Common myeloid progenitor, CD34-positive (primary cell): ENCODE measurements at regions of chr1 and their contacts with region 1.

Region 1: DNA sequence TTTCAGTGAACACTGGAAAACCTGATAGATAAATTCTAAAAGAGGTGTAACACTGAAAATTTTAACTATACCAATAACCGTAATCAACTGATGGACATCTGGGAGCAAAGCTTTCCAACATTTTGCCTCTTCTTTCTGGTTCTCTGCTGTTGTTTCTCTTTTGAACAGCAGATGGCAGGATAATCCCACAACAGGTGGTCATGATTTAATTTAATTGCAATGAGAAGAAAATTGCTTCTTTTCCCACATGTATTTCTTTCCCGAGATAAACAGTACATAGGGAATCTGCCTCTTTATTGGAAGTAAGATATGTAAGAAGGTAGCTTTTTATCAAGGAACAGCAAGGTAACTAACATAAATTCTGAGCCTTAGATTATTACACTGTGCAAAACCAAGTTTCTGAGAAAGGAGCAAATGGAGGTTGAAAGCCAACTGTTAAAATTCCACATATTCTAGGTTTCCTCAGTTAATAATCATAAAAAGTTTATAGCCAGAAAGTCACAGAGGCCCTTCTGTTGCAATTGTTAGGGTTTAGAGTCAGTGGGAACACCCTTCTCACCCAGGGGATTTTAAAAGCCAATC is 72.9 kb downstream of the RPS6KA1 start:
- DNase-seq: peak; percentile 67 to 80 (median 70)
- H3K4me3 ChIP-seq: no peak overlapping the region
- H3K27ac ChIP-seq: no peak overlapping the region
- H3K4me1 ChIP-seq: peaks cover 0 to 23% (median 12%) of the 10 kb centered on the region in 4 experiments
- H3K27me3 ChIP-seq: no peaks in the 10 kb centered on the region

Region 2: GRCh38 chr1:26541816-26542711 is 60.4 kb before region 1 on chr1:
- CTCF ChIA-PET with region 1: interaction called, 11 read pairs
- POLR2A ChIA-PET with region 1: no interaction called
- DNase-seq: peak; percentile 95 to 98 (median 98)
- H3K4me3 ChIP-seq: peak overlapping the region in 6 of 7 experiments; percentile 30 to 65 (median 39)
- H3K27ac ChIP-seq: peak overlapping the region; percentile 59 to 81
- H3K4me1 ChIP-seq: peaks cover 21 to 99% (median 93%) of the 10 kb centered on the region in 4 experiments
- H3K27me3 ChIP-seq: no peaks in the 10 kb centered on the region

Region 3: DNA sequence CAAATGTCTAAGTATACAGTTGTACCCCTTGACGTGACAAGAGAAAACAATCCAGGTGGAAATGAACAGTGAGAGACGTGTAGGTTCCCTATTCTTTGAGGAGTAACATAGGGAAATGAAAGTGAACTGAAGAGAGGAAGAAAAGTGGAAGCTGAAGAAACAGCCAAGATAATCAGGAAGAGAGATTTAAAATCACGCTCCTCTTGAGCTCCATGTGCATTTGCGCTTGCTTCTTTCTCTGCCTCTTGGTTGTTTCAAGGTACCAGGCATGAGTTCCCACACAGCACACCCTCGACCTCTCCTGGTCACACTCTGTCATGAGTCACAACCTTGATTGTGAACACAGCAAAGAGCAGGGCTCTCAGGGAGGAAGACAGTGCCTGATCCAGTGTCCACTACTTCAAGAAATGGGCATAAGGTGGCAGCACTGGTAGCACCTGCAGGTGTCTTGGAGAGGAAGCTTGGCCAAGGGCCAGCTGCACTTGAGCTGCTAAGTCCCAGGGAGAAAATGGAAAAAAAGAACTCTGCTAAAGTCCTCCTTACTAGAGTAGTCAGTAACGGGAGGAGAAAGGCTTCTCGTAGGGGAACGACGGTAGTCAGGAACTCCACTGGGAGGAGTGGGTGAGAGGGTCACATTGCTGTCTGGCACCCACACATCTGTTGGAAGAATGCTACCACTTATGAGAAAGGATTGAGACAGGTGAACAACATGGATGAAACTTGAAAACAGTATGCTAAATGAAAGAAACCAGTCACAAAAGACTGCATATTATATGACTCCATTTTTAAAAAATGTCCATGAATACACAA is 75.0 kb after region 1 on chr1:
- CTCF ChIA-PET with region 1: interaction called, 24 read pairs
- POLR2A ChIA-PET with region 1: no interaction called
- DNase-seq: peak; percentile 84 to 89 (median 89)
- H3K4me3 ChIP-seq: peak overlapping the region in 6 of 7 experiments; percentile 2 to 74 (median 42)
- H3K27ac ChIP-seq: no peak overlapping the region
- H3K4me1 ChIP-seq: peaks cover 7 to 19% (median 14%) of the 10 kb centered on the region in 4 experiments
- H3K27me3 ChIP-seq: no peaks in the 10 kb centered on the region

Region 4: DNA sequence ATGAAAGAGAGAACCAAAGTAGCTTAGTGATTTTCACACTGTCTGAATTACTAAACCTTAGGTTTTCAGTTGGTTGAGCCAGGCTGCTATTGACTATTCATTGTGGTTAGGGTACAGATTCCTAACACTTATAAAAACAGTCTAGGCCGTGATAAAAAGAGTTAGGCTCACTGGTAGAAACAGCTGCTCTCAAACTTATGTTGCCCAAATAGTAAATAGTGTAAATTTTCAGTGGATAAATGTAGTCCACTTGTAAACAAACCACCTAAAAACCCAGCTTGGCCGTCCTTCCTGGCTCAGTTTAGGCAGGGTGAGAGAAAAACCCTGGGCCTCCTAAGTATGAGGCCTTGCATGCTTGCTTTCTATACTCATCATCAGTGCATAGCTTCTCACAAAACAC is 128.2 kb after region 1 on chr1:
- CTCF ChIA-PET with region 1: interaction called, 10 read pairs
- POLR2A ChIA-PET with region 1: no interaction called
- DNase-seq: no peak
- H3K4me3 ChIP-seq: no peak overlapping the region
- H3K27ac ChIP-seq: peak overlapping the region in 1 of 2 experiments; percentile 6
- H3K4me1 ChIP-seq: peaks cover 0 to 17% (median 7%) of the 10 kb centered on the region in 4 experiments
- H3K27me3 ChIP-seq: no peaks in the 10 kb centered on the region

Region 5: DNA sequence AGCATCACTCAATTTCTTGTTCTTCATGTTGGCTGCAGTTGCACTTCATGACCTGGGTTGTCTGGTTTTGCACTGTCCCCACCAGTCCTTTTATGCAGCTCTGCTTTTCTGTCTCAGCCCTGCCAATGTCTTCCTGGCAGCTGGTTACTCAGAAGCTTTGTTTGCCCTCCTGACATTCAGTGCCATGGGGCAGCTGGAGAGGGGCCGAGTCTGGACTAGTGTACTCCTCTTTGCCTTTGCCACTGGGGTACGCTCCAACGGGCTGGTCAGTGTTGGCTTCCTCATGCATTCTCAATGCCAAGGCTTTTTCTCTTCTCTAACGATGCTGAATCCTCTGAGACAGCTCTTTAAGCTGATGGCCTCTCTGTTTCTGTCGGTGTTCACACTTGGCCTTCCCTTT is 191.9 kb after region 1 on chr1:
- CTCF ChIA-PET with region 1: interaction called, 186 read pairs
- POLR2A ChIA-PET with region 1: no interaction called
- DNase-seq: no peak
- H3K4me3 ChIP-seq: no peak overlapping the region
- H3K27ac ChIP-seq: no peak overlapping the region
- H3K4me1 ChIP-seq: peaks cover 18 to 25% (median 21%) of the 10 kb centered on the region in 4 experiments
- H3K27me3 ChIP-seq: no peaks in the 10 kb centered on the region

Region 6: DNA sequence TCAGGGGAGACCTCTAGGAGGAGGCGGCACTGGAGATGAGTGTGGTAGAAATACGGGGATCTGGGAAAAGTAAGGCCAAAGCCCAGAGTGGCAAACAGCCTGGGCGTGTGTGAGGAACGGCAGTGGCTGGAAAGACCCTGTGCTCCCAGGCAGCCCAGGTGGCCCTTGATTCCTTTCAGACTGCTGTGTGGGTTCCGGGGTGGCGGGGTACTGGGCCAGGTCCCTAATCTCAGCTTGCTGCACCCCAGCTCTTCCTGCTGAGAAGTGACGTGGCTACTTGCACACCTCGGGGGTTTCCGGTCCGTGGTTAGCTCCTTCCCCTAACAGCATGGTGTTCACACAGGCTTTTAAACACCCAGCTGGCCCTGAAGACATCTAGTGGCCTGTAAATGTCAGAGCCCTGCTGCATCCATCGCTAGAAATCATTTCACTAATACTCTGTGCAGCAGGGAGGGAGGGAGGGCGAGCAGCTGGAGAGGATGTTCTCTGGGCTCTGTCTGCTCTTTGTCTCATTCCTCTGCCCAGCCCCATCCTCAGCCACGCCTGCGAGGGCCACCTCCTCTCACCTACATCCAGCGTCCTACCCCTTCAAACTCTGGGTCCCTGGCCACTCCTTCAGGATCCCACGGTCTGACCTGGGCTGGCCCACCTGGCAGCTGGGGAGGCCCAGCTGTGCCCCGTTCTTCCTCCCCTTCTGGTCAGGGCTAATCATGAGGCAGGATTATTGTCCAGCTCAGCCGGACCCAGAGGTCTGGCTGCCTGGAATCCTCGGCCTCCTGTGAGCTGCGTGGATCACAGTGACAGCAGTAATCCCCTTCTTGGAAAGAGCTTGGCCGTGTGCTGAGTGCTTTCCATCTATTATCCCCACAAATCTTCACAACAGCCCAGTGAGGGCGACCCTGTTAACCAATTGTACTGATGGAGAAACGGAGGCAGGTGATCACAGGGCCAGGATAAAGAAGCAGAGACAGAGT is 231.2 kb after region 1 on chr1:
- CTCF ChIA-PET with region 1: interaction called, 11 read pairs
- POLR2A ChIA-PET with region 1: no interaction called
- DNase-seq: peak; percentile 96 to 99 (median 97)
- H3K4me3 ChIP-seq: peak overlapping the region in 4 of 7 experiments; percentile 21 to 53 (median 36)
- H3K27ac ChIP-seq: peak overlapping the region; percentile 70 to 85
- H3K4me1 ChIP-seq: peaks cover 13 to 48% (median 33%) of the 10 kb centered on the region in 4 experiments
- H3K27me3 ChIP-seq: no peaks in the 10 kb centered on the region